ENCODE measurements at regions of chr17 and their contacts with region 1.

Region 1: GRCh38 chr17:62024894-62025293 is 40.2 kb downstream of the MED13 start:
- DNase-seq: no peak
- H3K4me3 ChIP-seq: no peak overlapping the region
- H3K27ac ChIP-seq: no peak overlapping the region
- H3K4me1 ChIP-seq: no peaks in the 10 kb centered on the region
- H3K27me3 ChIP-seq: no peaks in the 10 kb centered on the region
- CTCF ChIP-seq: no peak

Region 2: DNA sequence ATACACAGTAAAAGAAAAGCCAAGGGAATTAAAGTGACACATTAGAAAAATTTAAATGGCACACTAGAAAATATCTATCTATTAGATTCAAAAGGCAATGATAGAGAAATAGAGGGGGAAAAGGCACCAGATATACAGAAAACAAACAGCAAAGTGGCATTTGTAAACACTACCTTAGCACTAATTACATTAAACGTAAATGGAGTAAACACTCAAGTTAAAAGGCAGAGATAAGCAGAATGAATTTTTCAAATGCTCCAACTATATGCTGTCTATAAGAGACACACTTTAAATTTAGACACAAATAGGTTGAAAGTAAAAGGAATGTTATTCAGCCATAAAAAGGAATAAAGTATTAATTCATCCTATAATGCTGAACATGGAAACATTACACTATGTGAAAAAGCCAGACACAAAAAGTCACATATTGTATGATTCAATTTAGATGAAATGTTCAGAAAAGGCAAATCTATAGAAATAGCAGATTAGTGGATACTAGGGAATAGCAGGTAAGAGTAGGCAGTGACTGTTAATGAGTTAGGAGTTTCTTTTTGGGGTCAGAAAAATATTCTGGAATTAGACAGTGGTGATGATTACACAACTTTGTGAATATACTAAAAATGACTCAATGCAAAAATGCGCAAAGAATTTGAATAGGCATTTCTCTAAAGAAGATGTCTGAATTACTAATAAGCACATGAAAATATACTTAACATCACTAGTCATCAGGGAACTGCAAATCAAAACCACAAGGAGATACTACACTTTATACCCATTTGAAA is 254.0 kb before region 1 on chr17:
- CTCF ChIA-PET with region 1: no interaction called
- POLR2A ChIA-PET with region 1: no interaction called
- intact Hi-C with region 1: no loop called
- DNase-seq: no peak
- H3K4me3 ChIP-seq: no peak overlapping the region
- H3K27ac ChIP-seq: no peak overlapping the region
- H3K4me1 ChIP-seq: no peaks in the 10 kb centered on the region
- H3K27me3 ChIP-seq: no peaks in the 10 kb centered on the region
- CTCF ChIP-seq: no peak

Region 3: GRCh38 chr17:61966191-61966590 is 58.7 kb before region 1 on chr17:
- CTCF ChIA-PET with region 1: no interaction called
- POLR2A ChIA-PET with region 1: no interaction called
- intact Hi-C with region 1: loop called (anchors 5 kb)
- DNase-seq: no peak
- H3K4me3 ChIP-seq: no peak overlapping the region
- H3K27ac ChIP-seq: no peak overlapping the region
- H3K4me1 ChIP-seq: no peaks in the 10 kb centered on the region
- H3K27me3 ChIP-seq: no peaks in the 10 kb centered on the region
- CTCF ChIP-seq: no peak

Region 4: GRCh38 chr17:62076862-62077788 is 52.2 kb after region 1 on chr17:
- CTCF ChIA-PET with region 1: no interaction called
- POLR2A ChIA-PET with region 1: no interaction called
- intact Hi-C with region 1: no loop called
- DNase-seq: no peak
- H3K4me3 ChIP-seq: no peak overlapping the region
- H3K27ac ChIP-seq: no peak overlapping the region
- H3K4me1 ChIP-seq: no peaks in the 10 kb centered on the region
- H3K27me3 ChIP-seq: no peaks in the 10 kb centered on the region
- CTCF ChIP-seq: no peak

Region 5: GRCh38 chr17:62093188-62094155 is 68.6 kb after region 1 on chr17:
- CTCF ChIA-PET with region 1: no interaction called
- POLR2A ChIA-PET with region 1: no interaction called
- intact Hi-C with region 1: no loop called
- DNase-seq: no peak
- H3K4me3 ChIP-seq: no peak overlapping the region
- H3K27ac ChIP-seq: no peak overlapping the region
- H3K4me1 ChIP-seq: no peaks in the 10 kb centered on the region
- H3K27me3 ChIP-seq: no peaks in the 10 kb centered on the region
- CTCF ChIP-seq: no peak

Measured in A673 (cell line).